Caco-2 (cell line): ENCODE measurements at regions of chr10 and their contacts with region 1.

Region 1: DNA sequence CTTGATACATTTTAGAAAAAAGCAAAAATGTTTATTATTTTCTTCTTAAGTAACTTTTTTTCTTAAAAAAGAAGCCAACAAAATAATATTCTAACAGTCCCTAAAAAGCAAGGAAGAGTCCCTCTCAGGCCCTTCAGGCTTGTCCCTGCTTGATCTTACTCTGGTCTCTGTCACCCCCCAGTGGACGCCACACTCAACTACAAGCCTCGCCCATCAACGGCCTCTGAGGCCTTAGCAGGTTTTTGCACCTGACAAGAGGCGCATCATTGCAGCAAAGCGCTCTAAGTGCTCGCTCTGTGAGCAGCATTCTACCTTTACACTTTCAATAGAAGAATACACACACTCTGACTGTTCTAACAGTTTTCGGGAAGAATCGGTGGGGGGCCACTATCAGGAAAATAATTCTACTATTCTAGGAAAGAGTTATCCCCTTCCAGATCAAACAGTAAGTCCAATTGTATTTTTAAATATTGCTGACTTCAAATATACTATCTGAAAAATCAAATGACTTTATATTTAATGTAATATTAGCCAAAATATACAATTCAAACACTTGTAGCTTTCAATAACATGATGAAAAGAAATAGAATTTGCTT is 139.2 kb downstream of the USP6NL start:
- DNase-seq: peak; percentile 71 to 86
- H3K4me3 ChIP-seq: no peak overlapping the region
- H3K4me3 Mint-ChIP-seq: no peak overlapping the region
- H3K27ac Mint-ChIP-seq: no peak overlapping the region
- H3K4me1 ChIP-seq: no peaks in the 10 kb centered on the region
- H3K4me1 Mint-ChIP-seq: no peaks in the 10 kb centered on the region
- H3K27me3 ChIP-seq: no peaks in the 10 kb centered on the region
- H3K27me3 Mint-ChIP-seq: no peaks in the 10 kb centered on the region
- CTCF ChIP-seq: peak; percentile 95 to 96

Region 2: DNA sequence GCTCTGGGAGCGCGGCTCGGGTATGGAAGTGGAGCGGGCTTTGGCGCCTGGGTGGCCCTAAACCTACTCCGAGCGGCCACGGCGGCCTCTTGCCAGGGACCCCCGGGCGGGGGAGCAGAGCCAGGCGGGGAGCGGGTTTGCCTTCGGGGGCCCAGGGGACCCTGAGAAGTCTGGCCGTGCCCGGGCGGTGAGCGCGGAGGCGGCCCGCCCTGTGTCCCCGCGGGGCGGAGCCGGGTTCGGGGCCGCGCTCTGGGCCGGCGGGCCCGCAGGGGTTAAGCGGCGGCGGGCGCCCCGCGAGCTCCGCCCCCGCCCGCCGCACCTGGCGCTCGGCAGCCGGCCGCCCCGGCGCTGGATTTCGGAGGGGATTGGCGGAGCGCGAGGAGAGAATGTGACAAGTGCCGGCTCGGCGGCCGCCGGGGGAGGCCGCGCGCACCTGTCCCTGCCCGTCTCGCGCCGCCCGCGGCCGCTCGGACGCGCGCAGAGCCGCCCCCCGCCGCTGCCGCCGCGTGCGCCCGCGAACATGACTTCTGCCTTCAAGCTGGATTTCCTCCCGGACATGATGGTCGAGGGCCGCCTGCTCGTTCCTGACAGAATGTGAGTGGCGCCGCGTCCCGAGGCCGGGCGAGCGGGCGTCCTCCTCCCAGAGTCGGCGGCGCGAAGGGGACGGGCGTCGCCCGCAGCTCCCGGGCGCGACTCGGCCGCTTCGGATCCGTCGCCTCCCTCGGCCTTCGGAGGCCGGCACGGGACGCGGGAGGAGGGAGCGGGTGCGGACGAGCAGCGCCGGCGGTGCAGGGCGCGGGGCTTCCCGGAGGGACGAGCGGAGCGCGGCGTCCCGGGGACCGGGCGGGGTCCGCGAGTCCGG is 454.5 kb before region 1 on chr10 and contains the start of gene CELF2:
- CTCF ChIA-PET with region 1: no interaction called
- POLR2A ChIA-PET with region 1: no interaction called
- intact Hi-C with region 1: loop called (anchors 2 kb)
- DNase-seq: peak; percentile 60 to 77
- H3K4me3 ChIP-seq: peak within 1 kb of the TSS; percentile 49
- H3K4me3 Mint-ChIP-seq: peak within 1 kb of the TSS; percentile 70
- H3K27ac Mint-ChIP-seq: no peak within 1 kb of the TSS
- H3K4me1 ChIP-seq: no peaks in the 10 kb centered on the region
- H3K4me1 Mint-ChIP-seq: no peaks in the 10 kb centered on the region
- H3K27me3 ChIP-seq: peaks cover 8% of the 10 kb centered on the region
- H3K27me3 Mint-ChIP-seq: peaks cover 45% of the 10 kb centered on the region
- CTCF ChIP-seq: no peak
- total RNA-seq, gene CELF2: 0.26 and 0.27 TPM in 2 replicates

Region 3: DNA sequence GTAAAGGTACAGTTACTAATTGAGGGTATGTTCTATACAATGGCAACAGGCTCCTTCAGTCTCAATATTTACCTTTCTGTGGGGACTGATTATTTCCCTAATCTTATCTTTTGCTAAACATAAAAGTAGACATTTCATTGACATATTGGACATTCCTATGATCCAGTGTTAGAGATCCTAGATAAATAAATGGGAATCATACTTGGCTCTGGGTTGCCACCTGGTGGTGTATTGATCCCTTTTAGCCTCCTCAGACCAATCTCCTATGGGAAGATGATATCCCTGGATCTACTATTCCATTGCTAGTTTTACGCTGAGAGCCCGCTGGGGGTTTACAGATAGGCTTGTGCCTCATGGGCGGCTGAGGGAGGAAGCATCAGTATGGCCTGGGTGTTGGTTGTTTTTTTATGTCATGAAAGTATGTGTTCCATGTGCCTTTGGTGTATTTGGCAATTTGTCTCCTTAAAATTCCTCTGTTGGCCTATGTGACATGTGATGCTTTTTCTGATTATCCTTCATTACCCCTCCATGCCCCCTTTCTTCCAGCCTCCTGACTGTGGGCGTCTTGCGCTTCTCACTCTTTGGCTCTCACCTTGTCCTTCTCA is 435.7 kb before region 1 on chr10:
- CTCF ChIA-PET with region 1: no interaction called
- POLR2A ChIA-PET with region 1: no interaction called
- intact Hi-C with region 1: loop called (anchors 5 kb)
- DNase-seq: peak; percentile 67 to 70
- H3K4me3 ChIP-seq: no peak overlapping the region
- H3K4me3 Mint-ChIP-seq: no peak overlapping the region
- H3K27ac Mint-ChIP-seq: no peak overlapping the region
- H3K4me1 ChIP-seq: no peaks in the 10 kb centered on the region
- H3K4me1 Mint-ChIP-seq: no peaks in the 10 kb centered on the region
- H3K27me3 ChIP-seq: no peaks in the 10 kb centered on the region; the same call in 1 of the 2 replicates
- H3K27me3 Mint-ChIP-seq: peaks cover 5% of the 10 kb centered on the region
- CTCF ChIP-seq: peak; percentile 71 to 81

Region 4: DNA sequence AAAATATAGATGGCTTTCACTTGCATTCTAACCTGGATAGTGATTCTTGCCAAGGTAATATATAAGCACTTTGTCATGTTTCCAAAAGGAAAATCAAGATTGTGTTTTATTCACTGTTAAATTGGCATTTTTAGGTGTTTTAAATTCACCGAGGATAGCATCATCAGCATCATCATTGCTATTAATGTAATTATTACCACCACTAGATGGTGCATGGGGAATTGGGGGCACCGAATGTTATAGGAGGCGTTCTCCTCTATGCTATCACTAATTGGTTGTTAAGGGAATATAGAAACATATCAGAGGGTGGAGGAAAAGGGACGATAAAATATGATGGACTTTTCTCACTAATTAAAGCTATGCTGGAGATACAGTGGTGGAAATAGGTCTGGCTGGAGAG is 359.1 kb before region 1 on chr10:
- CTCF ChIA-PET with region 1: no interaction called
- POLR2A ChIA-PET with region 1: no interaction called
- intact Hi-C with region 1: loop called (anchors 5 kb)
- DNase-seq: no peak
- H3K4me3 ChIP-seq: no peak overlapping the region
- H3K4me3 Mint-ChIP-seq: no peak overlapping the region
- H3K27ac Mint-ChIP-seq: no peak overlapping the region
- H3K4me1 ChIP-seq: no peaks in the 10 kb centered on the region
- H3K4me1 Mint-ChIP-seq: no peaks in the 10 kb centered on the region
- H3K27me3 ChIP-seq: 0 out of 2 replicates have a peak, but pooled peaks cover 2% of the 10 kb centered on the region
- H3K27me3 Mint-ChIP-seq: peaks cover 19% of the 10 kb centered on the region
- CTCF ChIP-seq: peak; percentile 28 to 30

Region 5: GRCh38 chr10:11270135-11270857 is 202.0 kb before region 1 on chr10:
- CTCF ChIA-PET with region 1: no interaction called
- POLR2A ChIA-PET with region 1: no interaction called
- intact Hi-C with region 1: loop called (anchors 2 kb)
- DNase-seq: peak; percentile 88 to 91
- H3K4me3 ChIP-seq: no peak overlapping the region
- H3K4me3 Mint-ChIP-seq: peak overlapping the region; percentile 17
- H3K27ac Mint-ChIP-seq: no peak overlapping the region
- H3K4me1 ChIP-seq: peaks cover 9% of the 10 kb centered on the region
- H3K4me1 Mint-ChIP-seq: peaks cover 7% of the 10 kb centered on the region
- H3K27me3 ChIP-seq: peaks cover 5% of the 10 kb centered on the region; the same call in 1 of the 2 replicates
- H3K27me3 Mint-ChIP-seq: peaks cover 40% of the 10 kb centered on the region
- CTCF ChIP-seq: peak; percentile 96 to 99

Region 6: DNA sequence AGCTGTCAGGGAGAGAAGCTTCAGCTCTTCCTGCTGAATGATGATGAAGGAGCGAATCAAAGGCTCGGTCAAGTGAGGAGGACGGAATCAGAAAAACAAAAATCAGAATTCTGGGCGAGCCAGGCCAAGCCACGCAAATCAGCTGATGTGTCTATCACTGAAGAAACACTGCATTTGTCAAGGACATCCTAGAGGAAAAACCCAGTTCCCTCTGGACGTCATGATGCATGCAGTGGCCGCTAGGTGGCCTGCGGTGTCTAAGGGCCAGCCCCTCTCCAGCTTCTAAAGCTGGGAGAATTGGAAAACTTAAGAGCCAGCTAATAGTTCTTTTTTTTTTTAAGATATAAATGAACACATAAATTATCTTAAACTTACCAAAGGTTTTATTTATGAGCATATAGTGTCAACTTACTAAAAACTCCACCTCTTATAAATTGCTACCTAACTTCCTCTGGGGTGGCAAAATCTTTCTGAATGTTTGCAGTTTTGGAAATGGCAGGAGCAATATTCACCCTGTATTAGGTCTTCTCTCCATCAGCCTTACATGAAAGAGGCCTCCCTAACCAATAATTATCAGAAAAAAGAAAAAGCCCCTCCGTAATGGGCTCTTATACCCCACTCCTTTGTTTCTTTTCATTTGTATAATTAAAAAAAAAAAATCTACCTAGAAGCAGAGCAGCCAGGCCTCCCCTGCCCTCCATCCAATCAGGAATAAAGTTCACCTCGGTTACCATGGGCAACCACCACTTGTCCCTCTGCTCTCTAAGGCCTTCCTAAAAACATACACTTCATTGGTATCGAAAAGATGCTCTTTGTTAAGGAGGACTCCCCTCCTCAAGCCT is 47.6 kb before region 1 on chr10:
- CTCF ChIA-PET with region 1: no interaction called
- POLR2A ChIA-PET with region 1: no interaction called
- intact Hi-C with region 1: loop called (anchors 1 kb)
- DNase-seq: peak; percentile 66 to 75
- H3K4me3 ChIP-seq: no peak overlapping the region
- H3K4me3 Mint-ChIP-seq: no peak overlapping the region
- H3K27ac Mint-ChIP-seq: no peak overlapping the region
- H3K4me1 ChIP-seq: no peaks in the 10 kb centered on the region
- H3K4me1 Mint-ChIP-seq: no peaks in the 10 kb centered on the region
- H3K27me3 ChIP-seq: no peaks in the 10 kb centered on the region
- H3K27me3 Mint-ChIP-seq: peaks cover 1% of the 10 kb centered on the region
- CTCF ChIP-seq: peak; percentile 97 to 99

Region 7: GRCh38 chr10:11434324-11434723 is 37.9 kb before region 1 on chr10:
- CTCF ChIA-PET with region 1: no interaction called
- POLR2A ChIA-PET with region 1: no interaction called
- intact Hi-C with region 1: loop called (anchors 1 kb)
- DNase-seq: peak in 1 of 2 experiments; percentile 49
- H3K4me3 ChIP-seq: no peak overlapping the region
- H3K4me3 Mint-ChIP-seq: no peak overlapping the region
- H3K27ac Mint-ChIP-seq: no peak overlapping the region
- H3K4me1 ChIP-seq: no peaks in the 10 kb centered on the region
- H3K4me1 Mint-ChIP-seq: no peaks in the 10 kb centered on the region
- H3K27me3 ChIP-seq: no peaks in the 10 kb centered on the region
- H3K27me3 Mint-ChIP-seq: peaks cover 10% of the 10 kb centered on the region
- CTCF ChIP-seq: peak; percentile 65 to 69

Region 8: GRCh38 chr10:11488126-11488525 is 15.9 kb after region 1 on chr10:
- CTCF ChIA-PET with region 1: no interaction called
- POLR2A ChIA-PET with region 1: no interaction called
- intact Hi-C with region 1: no loop called
- DNase-seq: no peak
- H3K4me3 ChIP-seq: no peak overlapping the region
- H3K4me3 Mint-ChIP-seq: no peak overlapping the region
- H3K27ac Mint-ChIP-seq: no peak overlapping the region
- H3K4me1 ChIP-seq: no peaks in the 10 kb centered on the region
- H3K4me1 Mint-ChIP-seq: no peaks in the 10 kb centered on the region
- H3K27me3 ChIP-seq: no peaks in the 10 kb centered on the region
- H3K27me3 Mint-ChIP-seq: no peaks in the 10 kb centered on the region
- CTCF ChIP-seq: no peak